ENCODE measurements at regions of chr5 and their contacts with region 1.

Region 1: GRCh38 chr5:83220331-83220730 is 143.0 kb downstream of the XRCC4 start:
- DNase-seq: no peak
- H3K4me3 ChIP-seq: no peak overlapping the region
- H3K27ac ChIP-seq: no peak overlapping the region
- H3K4me1 ChIP-seq: no peaks in the 10 kb centered on the region
- H3K27me3 ChIP-seq: no peaks in the 10 kb centered on the region
- CTCF ChIP-seq: no peak

Region 2: DNA sequence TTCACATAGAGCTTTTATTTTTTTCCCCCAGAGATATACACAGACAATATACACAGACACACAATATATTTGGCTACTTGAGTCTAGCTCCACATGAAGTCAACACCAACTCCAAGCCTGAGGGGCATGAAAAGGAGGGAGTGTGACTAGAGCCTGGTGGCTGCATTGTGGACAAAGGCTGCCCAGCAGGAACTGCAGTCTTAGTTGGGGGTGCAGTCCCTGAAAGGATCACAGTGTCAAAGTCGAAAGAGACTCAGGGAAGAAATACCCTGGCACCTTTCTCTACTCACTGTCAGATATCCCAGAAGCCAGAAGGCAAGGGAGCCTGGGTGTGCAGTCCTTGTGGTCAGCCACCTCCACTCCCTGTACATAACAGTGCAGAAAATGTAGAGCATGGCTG is 710.6 kb before region 1 on chr5:
- CTCF ChIA-PET with region 1: no interaction called
- POLR2A ChIA-PET with region 1: no interaction called
- intact Hi-C with region 1: no loop called
- DNase-seq: no peak
- H3K4me3 ChIP-seq: no peak overlapping the region
- H3K27ac ChIP-seq: no peak overlapping the region
- H3K4me1 ChIP-seq: no peaks in the 10 kb centered on the region
- H3K27me3 ChIP-seq: no peaks in the 10 kb centered on the region
- CTCF ChIP-seq: no peak

Region 3: GRCh38 chr5:83451955-83452354 is 231.6 kb after region 1 on chr5:
- CTCF ChIA-PET with region 1: no interaction called
- POLR2A ChIA-PET with region 1: interaction called, 12 read pairs
- intact Hi-C with region 1: no loop called
- DNase-seq: no peak
- H3K4me3 ChIP-seq: no peak overlapping the region
- H3K27ac ChIP-seq: no peak overlapping the region
- H3K4me1 ChIP-seq: no peaks in the 10 kb centered on the region
- H3K27me3 ChIP-seq: no peaks in the 10 kb centered on the region
- CTCF ChIP-seq: no peak